ENCODE measurements at regions of chr18 and their contacts with region 1.

Region 1: GRCh38 chr18:62763101-62763521 is 47.8 kb downstream of the PHLPP1 start:
- DNase-seq: no peak
- H3K4me3 ChIP-seq: no peak overlapping the region
- H3K27ac ChIP-seq: no peak overlapping the region; the same call in 1 of the 2 replicates
- H3K4me1 ChIP-seq: peaks cover 8 to 31% (median 24%) of the 10 kb centered on the region in 4 experiments
- H3K27me3 ChIP-seq: no peaks in the 10 kb centered on the region
- CTCF ChIP-seq: no peak
- EP300 ChIP-seq: no peak
- POLR2A ChIP-seq: no peak
- RAD21 ChIP-seq: no peak

Region 2: DNA sequence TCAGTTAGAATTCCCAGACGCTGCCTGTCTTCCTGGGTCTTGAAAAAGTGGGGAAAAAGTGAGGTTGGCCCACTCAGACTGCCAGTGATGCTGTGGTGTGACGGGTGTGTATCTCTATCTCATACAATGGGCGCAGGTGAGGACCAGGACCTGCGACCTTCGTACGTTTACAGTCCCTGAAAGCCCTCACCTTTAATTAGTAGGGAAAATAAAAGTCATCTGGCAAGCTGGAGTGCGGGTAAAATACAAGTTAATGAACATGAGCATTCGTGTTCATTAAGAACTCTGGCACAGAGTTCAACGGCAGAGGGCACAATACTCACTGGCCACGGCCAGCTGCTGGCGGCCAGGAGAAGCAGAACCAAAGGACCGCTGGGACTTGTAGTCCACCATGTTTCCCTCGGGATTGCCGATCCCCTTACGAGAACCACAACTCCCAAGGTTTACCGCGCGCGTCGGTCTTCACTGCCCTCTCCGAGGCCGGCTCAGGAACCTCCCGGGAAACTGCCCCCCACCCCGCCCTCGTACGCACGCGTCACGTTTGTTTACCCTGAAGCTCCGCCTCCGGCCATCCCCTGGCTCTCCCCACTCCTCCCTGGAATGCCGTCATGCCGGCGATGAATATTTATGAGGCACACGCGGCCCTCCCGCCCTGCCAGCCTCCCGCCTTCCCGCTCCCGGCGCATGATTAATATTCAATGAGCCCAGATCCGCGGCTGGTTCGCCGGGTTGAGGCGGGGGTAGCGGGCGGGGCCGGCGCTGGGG is 48.3 kb before region 1 on chr18:
- CTCF ChIA-PET with region 1: interaction called, 10 read pairs
- POLR2A ChIA-PET with region 1: interaction called, 9 read pairs
- DNase-seq: peak; percentile 95 to 99
- H3K4me3 ChIP-seq: peak overlapping the region; percentile 66 to 76 (median 70)
- H3K27ac ChIP-seq: peak overlapping the region; percentile 94
- H3K4me1 ChIP-seq: peaks cover 0 to 13% (median 6%) of the 10 kb centered on the region in 4 experiments; a peak in 5 of 7 replicates
- H3K27me3 ChIP-seq: no peaks in the 10 kb centered on the region
- CTCF ChIP-seq: peak; percentile 63 to 78 (median 73)
- EP300 ChIP-seq: peak in 1 of 2 experiments; percentile 66; a peak in 1 of 3 replicates
- POLR2A ChIP-seq: peak in 1 of 2 experiments; percentile 80; a peak in 2 of 3 replicates
- RAD21 ChIP-seq: peak; percentile 74 to 76

Region 3: GRCh38 chr18:62751341-62751821 is 11.7 kb before region 1 on chr18:
- CTCF ChIA-PET with region 1: interaction called, 17 read pairs
- POLR2A ChIA-PET with region 1: interaction called, 15 read pairs
- DNase-seq: peak in 1 of 2 experiments; percentile 68
- H3K4me3 ChIP-seq: peak overlapping the region in 2 of 4 experiments; percentile 2 to 40; a peak in 4 of 8 replicates
- H3K27ac ChIP-seq: peak overlapping the region; percentile 64
- H3K4me1 ChIP-seq: peaks cover 4 to 29% (median 23%) of the 10 kb centered on the region in 4 experiments
- H3K27me3 ChIP-seq: no peaks in the 10 kb centered on the region
- CTCF ChIP-seq: no peak
- EP300 ChIP-seq: peak in 1 of 2 experiments; percentile 83; a peak in 2 of 3 replicates
- POLR2A ChIP-seq: no peak
- RAD21 ChIP-seq: no peak

Region 4: DNA sequence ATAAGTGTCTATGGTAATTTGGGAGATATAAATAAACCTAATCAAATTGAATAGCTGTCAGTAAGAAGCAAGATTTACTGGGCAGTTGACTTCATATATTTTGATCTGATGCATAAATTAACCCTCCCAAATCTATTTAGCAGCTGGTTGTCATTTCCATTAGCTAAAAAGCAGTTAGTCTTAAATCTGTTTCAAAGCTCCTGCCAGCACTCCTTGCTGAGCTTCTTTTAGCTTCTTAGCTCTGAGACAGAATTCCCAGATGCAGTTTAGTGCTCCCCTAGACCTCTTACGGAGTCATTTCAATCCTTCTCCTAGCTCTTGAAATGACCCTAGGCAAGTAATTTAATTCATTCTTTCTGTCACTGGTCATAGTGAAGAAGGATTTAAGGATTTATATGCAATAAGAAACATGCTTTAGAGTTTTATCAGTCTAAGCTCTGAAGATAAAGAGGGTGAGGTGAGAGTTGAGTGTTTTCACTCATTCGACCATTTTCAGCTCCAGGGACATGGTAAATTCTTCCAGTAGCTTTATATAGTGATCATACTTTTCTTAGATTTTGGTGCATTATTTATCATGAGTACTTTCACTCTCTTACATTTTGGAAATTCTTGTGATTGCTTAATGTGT is 51.1 kb after region 1 on chr18:
- CTCF ChIA-PET with region 1: no interaction called
- POLR2A ChIA-PET with region 1: no interaction called
- DNase-seq: no peak
- H3K4me3 ChIP-seq: no peak overlapping the region
- H3K27ac ChIP-seq: no peak overlapping the region
- H3K4me1 ChIP-seq: peaks cover 0 to 19% (median 8%) of the 10 kb centered on the region in 4 experiments; a peak in 5 of 7 replicates
- H3K27me3 ChIP-seq: no peaks in the 10 kb centered on the region
- CTCF ChIP-seq: no peak
- EP300 ChIP-seq: no peak
- POLR2A ChIP-seq: no peak
- RAD21 ChIP-seq: no peak

Region 5: GRCh38 chr18:62825382-62825781 is 62.3 kb after region 1 on chr18:
- CTCF ChIA-PET with region 1: no interaction called
- POLR2A ChIA-PET with region 1: no interaction called
- DNase-seq: no peak
- H3K4me3 ChIP-seq: no peak overlapping the region
- H3K27ac ChIP-seq: no peak overlapping the region
- H3K4me1 ChIP-seq: peaks cover 0 to 5% (median 1%) of the 10 kb centered on the region in 4 experiments; a peak in 2 of 7 replicates
- H3K27me3 ChIP-seq: no peaks in the 10 kb centered on the region
- CTCF ChIP-seq: no peak
- EP300 ChIP-seq: no peak
- POLR2A ChIP-seq: no peak
- RAD21 ChIP-seq: no peak

Region 6: GRCh38 chr18:62898359-62898758 is 135.2 kb after region 1 on chr18:
- CTCF ChIA-PET with region 1: no interaction called
- POLR2A ChIA-PET with region 1: no interaction called
- DNase-seq: no peak
- H3K4me3 ChIP-seq: no peak overlapping the region
- H3K27ac ChIP-seq: no peak overlapping the region
- H3K4me1 ChIP-seq: no peaks in the 10 kb centered on the region; a peak in 3 of 7 replicates
- H3K27me3 ChIP-seq: peaks cover 0 to 2% (median 0%) of the 10 kb centered on the region in 4 experiments; a peak in 1 of 7 replicates
- CTCF ChIP-seq: no peak
- EP300 ChIP-seq: no peak
- POLR2A ChIP-seq: no peak
- RAD21 ChIP-seq: no peak

Measured in H1 (cell line).